ENCODE measurements at regions of chr19 and their contacts with region 1.

Region 1: GRCh38 chr19:10602330-10603083 is 15.4 kb upstream of the AP1M2 start:
- DNase-seq: peak; percentile 91
- H3K4me3 Mint-ChIP-seq: peak overlapping the region; percentile 98
- H3K27ac Mint-ChIP-seq: peak overlapping the region; percentile 100
- H3K4me1 Mint-ChIP-seq: peaks cover 24% of the 10 kb centered on the region
- H3K27me3 Mint-ChIP-seq: no peaks in the 10 kb centered on the region

Region 2: GRCh38 chr19:10424011-10424637 is 178.4 kb before region 1 on chr19:
- CTCF ChIA-PET with region 1: no interaction called
- intact Hi-C with region 1: loop called (anchors 2 kb)
- DNase-seq: peak; percentile 81
- H3K4me3 Mint-ChIP-seq: peak overlapping the region; percentile 67
- H3K27ac Mint-ChIP-seq: peak overlapping the region; percentile 91
- H3K4me1 Mint-ChIP-seq: peaks cover 70% of the 10 kb centered on the region
- H3K27me3 Mint-ChIP-seq: peaks cover 63% of the 10 kb centered on the region

Region 3: GRCh38 chr19:10644260-10645007 is 41.9 kb after region 1 on chr19:
- CTCF ChIA-PET with region 1: interaction called, 5 read pairs
- intact Hi-C with region 1: loop called (anchors 2 kb)
- DNase-seq: peak; percentile 90
- H3K4me3 Mint-ChIP-seq: no peak overlapping the region
- H3K27ac Mint-ChIP-seq: no peak overlapping the region
- H3K4me1 Mint-ChIP-seq: peaks cover 16% of the 10 kb centered on the region
- H3K27me3 Mint-ChIP-seq: no peaks in the 10 kb centered on the region

Region 4: GRCh38 chr19:10670182-10670581 is 67.7 kb after region 1 on chr19:
- CTCF ChIA-PET with region 1: no interaction called
- intact Hi-C with region 1: no loop called
- DNase-seq: no peak
- H3K4me3 Mint-ChIP-seq: no peak overlapping the region
- H3K27ac Mint-ChIP-seq: no peak overlapping the region
- H3K4me1 Mint-ChIP-seq: peaks cover 29% of the 10 kb centered on the region
- H3K27me3 Mint-ChIP-seq: no peaks in the 10 kb centered on the region

Measured in activated naive CD4-positive, alpha-beta T cell treated with anti-CD3 and anti-CD28 coated beads for 36 hours (primary cell).